Endothelial cell of umbilical vein (primary cell): ENCODE measurements at regions of chr19 and their contacts with region 1.

Region 1: GRCh38 chr19:46030812-46031550 is 8.1 kb upstream of the PGLYRP1 start:
- DNase-seq: no peak
- H3K4me3 ChIP-seq: no peak overlapping the region
- H3K27ac ChIP-seq: no peak overlapping the region
- H3K4me1 ChIP-seq: no peaks in the 10 kb centered on the region
- H3K27me3 ChIP-seq: no peaks in the 10 kb centered on the region
- CTCF ChIP-seq: no peak
- POLR2A ChIP-seq: no peak

Region 2: DNA sequence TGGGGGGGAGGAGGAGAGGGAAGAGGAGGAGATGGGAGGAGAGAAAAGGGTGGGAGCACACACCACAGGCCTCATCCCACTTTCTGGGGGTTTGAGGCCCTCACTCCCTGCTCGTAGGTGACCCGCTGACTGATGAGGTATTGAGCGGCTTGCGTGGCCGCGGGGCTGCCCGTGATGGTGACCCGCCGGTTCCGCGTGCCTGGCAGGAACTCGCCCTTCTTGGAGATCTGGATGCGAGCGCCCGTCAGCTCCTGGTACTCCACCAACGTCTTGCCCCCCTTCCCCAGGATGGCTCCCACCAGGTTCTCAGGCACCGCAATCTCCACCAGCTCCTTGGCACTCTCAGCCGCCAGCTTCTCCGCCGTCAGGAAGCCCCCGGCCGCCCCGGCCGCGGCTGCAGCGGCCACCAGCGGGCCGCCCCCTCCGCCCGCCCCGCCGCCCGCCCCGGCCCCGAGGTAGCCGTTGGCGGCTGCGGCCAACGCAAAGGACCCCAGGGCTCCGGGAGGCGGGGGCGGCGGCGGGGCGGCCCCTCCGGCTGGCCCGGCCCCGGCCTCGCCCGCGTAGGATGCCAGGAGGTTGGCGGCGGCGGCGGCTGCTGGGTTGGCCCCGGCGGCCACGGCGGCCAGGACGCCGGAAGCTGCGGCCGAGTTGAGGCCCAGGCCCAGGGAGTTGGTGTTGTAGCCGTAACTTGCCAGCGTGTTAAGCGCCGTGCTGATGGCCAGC is 91.0 kb before region 1 on chr19:
- CTCF ChIA-PET with region 1: no interaction called
- POLR2A ChIA-PET with region 1: no interaction called
- dilution Hi-C with region 1: no loop called
- intact Hi-C with region 1: no loop called
- DNase-seq: no peak
- H3K4me3 ChIP-seq: no peak overlapping the region
- H3K27ac ChIP-seq: no peak overlapping the region
- H3K4me1 ChIP-seq: no peaks in the 10 kb centered on the region
- H3K27me3 ChIP-seq: no peaks in the 10 kb centered on the region
- CTCF ChIP-seq: no peak
- POLR2A ChIP-seq: no peak

Region 3: GRCh38 chr19:46009530-46010510 is 21.2 kb before region 1 on chr19:
- CTCF ChIA-PET with region 1: interaction called, 52 read pairs
- POLR2A ChIA-PET with region 1: no interaction called
- dilution Hi-C with region 1: no loop called
- intact Hi-C with region 1: no loop called
- DNase-seq: peak; percentile 76
- H3K4me3 ChIP-seq: no peak overlapping the region
- H3K27ac ChIP-seq: no peak overlapping the region
- H3K4me1 ChIP-seq: no peaks in the 10 kb centered on the region
- H3K27me3 ChIP-seq: no peaks in the 10 kb centered on the region
- CTCF ChIP-seq: peak; percentile 80 to 92
- POLR2A ChIP-seq: no peak

Region 4: DNA sequence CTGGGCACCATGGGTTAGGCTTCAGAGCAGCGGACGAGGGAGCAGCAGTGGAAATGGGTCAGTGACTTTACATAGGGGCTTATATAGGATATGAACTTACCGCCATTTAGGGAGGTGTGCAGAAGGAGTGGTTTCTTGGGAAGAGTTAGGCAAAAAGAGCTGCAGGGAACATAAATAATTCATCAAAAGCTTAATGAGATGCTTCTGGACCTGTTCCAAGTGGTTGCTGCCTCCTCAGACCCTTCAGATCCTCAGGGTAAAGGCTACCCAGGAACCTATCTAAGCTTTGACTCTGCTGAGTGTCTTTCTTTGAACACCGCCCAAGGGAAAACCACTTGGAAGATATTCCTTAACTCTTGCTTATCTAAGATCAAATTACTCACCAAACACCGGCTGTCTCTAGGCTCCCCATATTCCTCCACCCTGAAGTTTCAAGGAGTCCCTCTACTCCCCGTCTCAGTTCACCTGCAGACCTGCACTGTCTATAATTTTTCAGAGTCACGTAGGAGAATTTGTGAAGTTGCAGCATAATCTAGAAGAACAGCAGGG is 10.0 kb after region 1 on chr19 and contains the start of gene IGFL4:
- CTCF ChIA-PET with region 1: interaction called, 26 read pairs
- POLR2A ChIA-PET with region 1: no interaction called
- dilution Hi-C with region 1: no loop called
- intact Hi-C with region 1: no loop called
- DNase-seq: no peak
- H3K4me3 ChIP-seq: no peak within 1 kb of the TSS
- H3K27ac ChIP-seq: no peak within 1 kb of the TSS
- H3K4me1 ChIP-seq: no peaks in the 10 kb centered on the region
- H3K27me3 ChIP-seq: peaks cover 7 to 9% of the 10 kb centered on the region in 2 experiments
- CTCF ChIP-seq: no peak
- POLR2A ChIP-seq: no peak
- total RNA-seq, gene IGFL4: not detected in 2 replicates

Region 5: GRCh38 chr19:46056536-46056935 is 25.6 kb after region 1 on chr19:
- CTCF ChIA-PET with region 1: interaction called, 32 read pairs
- POLR2A ChIA-PET with region 1: no interaction called
- dilution Hi-C with region 1: no loop called
- intact Hi-C with region 1: no loop called
- DNase-seq: no peak
- H3K4me3 ChIP-seq: no peak overlapping the region
- H3K27ac ChIP-seq: no peak overlapping the region
- H3K4me1 ChIP-seq: no peaks in the 10 kb centered on the region
- H3K27me3 ChIP-seq: peaks cover 13 to 43% of the 10 kb centered on the region in 2 experiments
- CTCF ChIP-seq: no peak
- POLR2A ChIP-seq: no peak

Region 6: DNA sequence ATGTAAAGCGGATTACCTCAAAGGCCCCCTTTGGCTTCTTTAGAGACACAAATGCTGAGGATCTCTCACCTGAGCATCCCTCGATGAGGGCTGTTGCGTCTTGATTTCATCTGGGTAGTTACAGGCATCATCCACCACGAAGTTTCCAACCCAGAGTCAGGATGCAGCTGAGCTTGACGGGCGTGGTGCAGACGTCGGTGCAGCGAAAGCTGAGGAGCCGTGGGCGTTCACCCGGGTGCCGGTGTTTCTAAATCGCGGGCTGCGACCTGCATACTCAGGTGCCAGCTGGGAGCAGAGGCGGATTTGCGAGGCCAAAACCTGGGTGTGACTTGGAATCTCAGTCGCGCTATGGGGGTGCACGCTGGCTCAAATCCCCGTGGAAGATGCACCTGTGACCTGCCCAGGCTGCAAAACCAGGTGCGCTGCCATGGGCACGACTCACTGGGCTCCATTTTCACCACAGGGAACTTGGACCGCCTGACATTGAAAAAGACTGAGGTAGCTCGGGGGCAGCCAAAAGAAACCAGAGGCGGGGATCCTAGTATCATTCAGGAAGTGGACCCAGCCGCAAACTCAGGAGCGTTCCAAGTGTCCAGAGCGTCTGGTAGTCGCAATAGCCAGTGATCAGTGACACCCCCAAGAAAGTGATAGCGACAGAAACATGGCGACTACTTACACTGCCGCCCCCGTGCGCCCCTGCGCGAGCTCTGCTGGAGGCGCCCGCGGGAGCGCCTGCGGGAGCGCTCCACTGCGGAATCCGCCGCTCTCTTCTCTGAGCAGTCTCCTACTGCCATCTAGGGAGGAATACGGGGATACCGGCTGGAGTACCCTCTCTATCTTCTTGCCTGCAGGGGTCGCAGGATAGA is 46.2 kb after region 1 on chr19:
- CTCF ChIA-PET with region 1: interaction called, 460 read pairs
- POLR2A ChIA-PET with region 1: no interaction called
- dilution Hi-C with region 1: no loop called
- intact Hi-C with region 1: loop called (anchors 1 kb)
- DNase-seq: peak; percentile 82
- H3K4me3 ChIP-seq: peak overlapping the region in 1 of 3 experiments; percentile 17
- H3K27ac ChIP-seq: no peak overlapping the region
- H3K4me1 ChIP-seq: peaks cover 4% of the 10 kb centered on the region
- H3K27me3 ChIP-seq: peaks cover 31 to 45% of the 10 kb centered on the region in 2 experiments
- CTCF ChIP-seq: peak; percentile 97 to 98
- POLR2A ChIP-seq: no peak

Region 7: DNA sequence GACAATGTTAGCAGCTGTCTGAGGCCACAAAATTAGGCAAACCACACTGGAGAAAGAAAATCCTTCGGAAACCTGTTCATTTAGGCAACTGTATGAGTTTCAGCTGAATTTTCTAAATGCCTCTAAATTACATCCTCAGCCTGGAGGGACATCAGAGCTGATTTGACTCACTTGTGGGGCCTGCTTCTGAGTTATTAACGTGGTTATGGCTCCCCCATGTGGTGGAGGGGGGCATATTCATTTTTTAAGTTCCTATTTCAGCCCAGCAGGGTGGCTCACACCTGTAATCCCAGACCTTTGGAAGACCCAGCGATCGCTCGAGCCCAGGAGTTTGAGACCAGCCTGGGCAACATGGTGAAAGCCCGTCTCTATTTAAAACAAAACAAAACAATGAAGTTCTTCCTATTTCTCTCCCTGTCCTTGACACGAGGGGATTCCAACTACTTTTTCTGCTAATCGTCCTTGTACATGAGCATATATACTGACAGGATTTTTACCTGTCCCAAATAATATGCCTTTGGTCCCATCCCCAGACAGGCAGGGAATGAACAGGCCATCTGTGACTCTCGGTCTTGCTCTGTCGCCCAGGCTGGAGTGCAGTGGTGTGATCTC is 234.3 kb after region 1 on chr19:
- CTCF ChIA-PET with region 1: interaction called, 155 read pairs
- POLR2A ChIA-PET with region 1: no interaction called
- dilution Hi-C with region 1: no loop called
- intact Hi-C with region 1: loop called (anchors 1 kb)
- DNase-seq: peak; percentile 83
- H3K4me3 ChIP-seq: no peak overlapping the region
- H3K27ac ChIP-seq: no peak overlapping the region
- H3K4me1 ChIP-seq: peaks cover 6% of the 10 kb centered on the region
- H3K27me3 ChIP-seq: peaks cover 5 to 7% of the 10 kb centered on the region in 2 experiments
- CTCF ChIP-seq: peak; percentile 61 to 73
- POLR2A ChIP-seq: no peak

Region 8: GRCh38 chr19:46351241-46352041 is 320.5 kb after region 1 on chr19:
- CTCF ChIA-PET with region 1: no interaction called
- POLR2A ChIA-PET with region 1: no interaction called
- dilution Hi-C with region 1: no loop called
- intact Hi-C with region 1: no loop called
- DNase-seq: peak; percentile 70
- H3K4me3 ChIP-seq: peak overlapping the region in 1 of 3 experiments; percentile 25
- H3K27ac ChIP-seq: peak overlapping the region; percentile 84
- H3K4me1 ChIP-seq: peaks cover 36% of the 10 kb centered on the region
- H3K27me3 ChIP-seq: no peaks in the 10 kb centered on the region
- CTCF ChIP-seq: no peak
- POLR2A ChIP-seq: no peak